B cell (primary cell): ENCODE measurements at regions of chr6 and their contacts with region 1.

Region 1: GRCh38 chr6:113442040-113442439 is 415.1 kb upstream of the MARCKS start:
- DNase-seq: no peak
- ATAC-seq: no peak
- H3K4me3 ChIP-seq: no peak overlapping the region
- H3K4me3 Mint-ChIP-seq: no peak overlapping the region
- H3K27ac ChIP-seq: no peak overlapping the region
- H3K27ac Mint-ChIP-seq: no peak overlapping the region
- H3K4me1 ChIP-seq: no peaks in the 10 kb centered on the region
- H3K4me1 Mint-ChIP-seq: no peaks in the 10 kb centered on the region
- H3K27me3 ChIP-seq: peaks cover 0 to 3% (median 0%) of the 10 kb centered on the region in 4 experiments
- H3K27me3 Mint-ChIP-seq: peaks cover 4% of the 10 kb centered on the region
- CTCF ChIP-seq: no peak

Region 2: DNA sequence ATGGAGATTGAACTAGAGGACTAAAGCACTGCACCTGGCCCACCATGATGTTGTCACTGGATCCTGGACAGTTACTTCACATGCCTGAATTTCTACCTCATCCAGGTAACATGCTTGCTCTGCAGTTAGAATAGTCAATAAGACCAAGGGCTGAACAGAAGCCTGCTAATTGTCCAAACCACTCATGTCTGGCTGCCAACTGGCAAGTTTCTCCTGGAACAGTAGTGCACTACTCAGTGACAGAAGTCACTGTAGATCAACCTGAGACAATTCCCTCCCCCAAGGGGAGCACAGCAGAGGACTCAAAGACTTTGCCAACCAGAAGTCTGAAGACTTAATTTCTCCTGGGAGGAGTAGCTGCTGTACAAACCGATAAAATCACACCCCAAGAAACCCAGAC is 39.5 kb before region 1 on chr6:
- CTCF ChIA-PET with region 1: no interaction called
- POLR2A ChIA-PET with region 1: no interaction called
- intact Hi-C with region 1: no loop called
- DNase-seq: no peak
- ATAC-seq: no peak
- H3K4me3 ChIP-seq: no peak overlapping the region
- H3K4me3 Mint-ChIP-seq: no peak overlapping the region
- H3K27ac ChIP-seq: no peak overlapping the region
- H3K27ac Mint-ChIP-seq: no peak overlapping the region
- H3K4me1 ChIP-seq: no peaks in the 10 kb centered on the region
- H3K4me1 Mint-ChIP-seq: no peaks in the 10 kb centered on the region
- H3K27me3 ChIP-seq: no peaks in the 10 kb centered on the region
- H3K27me3 Mint-ChIP-seq: peaks cover 5% of the 10 kb centered on the region
- CTCF ChIP-seq: no peak

Region 3: GRCh38 chr6:113723182-113723581 is 281.1 kb after region 1 on chr6:
- CTCF ChIA-PET with region 1: no interaction called
- POLR2A ChIA-PET with region 1: interaction called, 11 read pairs
- intact Hi-C with region 1: no loop called
- DNase-seq: no peak
- ATAC-seq: no peak
- H3K4me3 ChIP-seq: no peak overlapping the region
- H3K4me3 Mint-ChIP-seq: no peak overlapping the region
- H3K27ac ChIP-seq: no peak overlapping the region
- H3K27ac Mint-ChIP-seq: no peak overlapping the region
- H3K4me1 ChIP-seq: peaks cover 0 to 5% of the 10 kb centered on the region in 2 donors
- H3K4me1 Mint-ChIP-seq: peaks cover 8% of the 10 kb centered on the region
- H3K27me3 ChIP-seq: no peaks in the 10 kb centered on the region
- H3K27me3 Mint-ChIP-seq: no peaks in the 10 kb centered on the region
- CTCF ChIP-seq: no peak